Activated CD4-positive, alpha-beta memory T cell treated with anti-CD3 and anti-CD28 coated beads, Interleukin-2, amount 10 ng/mL, durations not matched to agents 7 days and 5 days (primary cell): ENCODE measurements at regions of chr3 and their contacts with region 1.

Region 1: DNA sequence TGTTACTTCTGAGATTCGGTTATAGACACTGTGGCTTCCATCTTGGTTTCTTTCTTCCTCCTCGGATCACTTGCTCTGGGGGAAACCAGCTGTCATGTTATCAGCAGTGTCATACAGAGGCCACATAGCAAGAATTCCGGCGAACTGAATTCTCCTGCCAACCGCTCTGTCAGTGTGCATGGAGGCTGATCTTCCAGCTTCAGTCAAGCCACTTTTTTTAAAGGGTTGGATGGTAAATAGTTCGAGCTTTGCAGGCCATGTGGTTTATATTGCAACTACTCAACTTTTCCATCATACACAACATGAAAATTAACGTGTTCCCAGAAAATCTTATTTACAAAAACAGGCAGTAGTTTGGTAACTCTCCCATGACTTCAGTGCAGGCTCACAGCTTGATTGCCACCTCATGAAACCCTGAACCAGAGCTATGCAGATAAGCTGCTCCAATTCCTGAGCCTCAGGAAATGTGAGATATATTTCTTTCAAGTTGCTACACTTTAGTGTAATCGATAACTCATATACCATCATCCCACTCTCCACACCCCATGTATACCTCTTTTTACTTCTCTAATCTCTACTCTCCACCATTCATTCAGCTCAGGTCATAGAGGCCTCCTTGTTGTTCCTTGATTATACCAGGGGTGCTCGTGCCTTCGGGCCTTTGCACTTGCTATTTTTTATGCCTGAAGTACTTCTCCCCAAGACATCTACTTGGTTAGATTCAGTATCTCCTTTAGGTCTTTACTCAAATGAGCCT is 7.2 kb downstream of the RPL22L1 start:
- DNase-seq: no peak
- H3K4me3 Mint-ChIP-seq: no peak overlapping the region
- H3K27ac Mint-ChIP-seq: no peak overlapping the region
- H3K4me1 Mint-ChIP-seq: peaks cover 15% of the 10 kb centered on the region
- H3K27me3 Mint-ChIP-seq: no peaks in the 10 kb centered on the region

Region 2: GRCh38 chr3:170765419-170766078 is 97.2 kb before region 1 on chr3:
- CTCF ChIA-PET with region 1: no interaction called
- POLR2A ChIA-PET with region 1: no interaction called
- DNase-seq: no peak
- H3K4me3 Mint-ChIP-seq: no peak overlapping the region
- H3K27ac Mint-ChIP-seq: no peak overlapping the region
- H3K4me1 Mint-ChIP-seq: peaks cover 9% of the 10 kb centered on the region
- H3K27me3 Mint-ChIP-seq: peaks cover 15% of the 10 kb centered on the region

Region 3: GRCh38 chr3:170908235-170909116 is 45.7 kb after region 1 on chr3 and contains the start of gene EIF5A2:
- CTCF ChIA-PET with region 1: no interaction called
- POLR2A ChIA-PET with region 1: interaction called, 52 read pairs
- DNase-seq: peak; percentile 96
- H3K4me3 Mint-ChIP-seq: peak within 1 kb of the TSS; percentile 96
- H3K27ac Mint-ChIP-seq: peak within 1 kb of the TSS; percentile 84
- H3K4me1 Mint-ChIP-seq: peaks cover 28% of the 10 kb centered on the region
- H3K27me3 Mint-ChIP-seq: peaks cover 19% of the 10 kb centered on the region
- total RNA-seq, gene EIF5A2: 13.0 to 15.5 TPM